Heart left ventricle (tissue), 16 donors: ENCODE measurements at regions of chr13 and their contacts with region 1.

Region 1: DNA sequence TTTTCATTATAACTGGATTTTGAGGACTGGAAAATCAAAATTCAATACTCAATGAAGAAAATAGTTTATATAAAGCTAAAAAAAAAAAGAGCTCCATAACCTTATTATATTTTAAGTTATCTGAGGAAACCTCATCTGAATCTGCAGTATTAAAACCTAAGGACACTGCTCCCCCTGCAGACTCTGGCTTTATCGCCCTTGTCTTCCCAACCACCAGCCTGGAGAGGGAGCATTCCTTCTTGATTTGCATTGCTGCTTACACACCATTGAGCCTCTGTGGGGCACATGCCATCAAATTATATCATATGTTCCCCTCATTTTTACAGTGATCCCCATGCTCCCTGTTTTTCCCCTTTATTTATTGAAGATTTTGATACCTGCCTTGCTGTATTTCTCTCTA is 871.4 kb upstream of the GPC6 start:
- DNase-seq: no peak
- ATAC-seq: peak in 1 of 4 donors; percentile 45
- H3K4me3 ChIP-seq: no peak overlapping the region
- H3K27ac ChIP-seq: no peak overlapping the region
- H3K4me1 ChIP-seq: no peaks in the 10 kb centered on the region
- H3K27me3 ChIP-seq: no peaks in the 10 kb centered on the region
- CTCF ChIP-seq: peak in 6 of 12 donors; percentile 11 to 41 (median 35)
- POLR2A ChIP-seq: no peak

Region 2: GRCh38 chr13:92187378-92187989 is 167.7 kb before region 1 on chr13:
- intact Hi-C with region 1: loop called in 7 of 10 experiments (anchors 2 to 10 kb)
- DNase-seq: no peak
- ATAC-seq: peak in 1 of 4 donors; percentile 52
- H3K4me3 ChIP-seq: no peak overlapping the region
- H3K27ac ChIP-seq: no peak overlapping the region
- H3K4me1 ChIP-seq: no peaks in the 10 kb centered on the region
- H3K27me3 ChIP-seq: no peaks in the 10 kb centered on the region
- CTCF ChIP-seq: peak; percentile 60 to 85 (median 75)
- POLR2A ChIP-seq: no peak